Sciatic nerve (tissue), 2 donors: ENCODE measurements at regions of chr3 and their contacts with region 1.

Region 1: GRCh38 chr3:46733026-46733800 is 15.5 kb upstream of the PRSS50 start:
- DNase-seq: no peak
- ATAC-seq: no peak

Region 2: DNA sequence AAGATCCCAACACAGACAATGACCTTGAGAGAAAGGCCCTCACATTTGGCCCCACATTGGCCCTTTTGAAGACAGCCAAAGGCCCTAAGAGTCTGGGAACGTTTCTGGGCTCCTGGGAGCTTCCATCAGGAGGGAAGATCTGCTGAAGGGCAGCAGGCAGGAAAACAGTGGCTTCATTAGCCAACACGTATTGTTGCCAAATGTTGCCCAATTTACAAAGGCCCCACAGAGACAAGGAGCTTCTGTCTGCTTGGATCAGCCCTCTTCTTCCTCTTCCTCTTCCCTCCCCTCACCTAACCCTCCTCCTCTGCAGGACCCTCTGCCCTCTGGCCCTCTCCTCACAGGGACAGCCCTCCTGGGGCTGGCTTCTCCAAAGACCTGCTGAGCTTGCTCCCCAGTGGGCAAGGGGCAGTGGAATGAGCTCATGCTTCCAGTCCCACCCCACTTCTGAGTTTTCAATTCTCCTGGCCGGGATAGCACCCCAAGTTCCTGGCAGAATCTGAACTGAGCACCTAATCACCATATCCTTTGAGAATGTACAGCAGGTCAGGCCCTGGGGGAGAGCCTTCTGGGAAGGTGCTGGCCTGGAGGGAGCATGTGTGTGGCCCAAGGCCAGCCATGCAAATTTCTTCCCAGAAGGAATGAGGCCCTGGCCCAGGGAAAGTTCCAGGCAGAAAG is 263.4 kb before region 1 on chr3:
- intact Hi-C with region 1: no loop called
- DNase-seq: no peak
- ATAC-seq: peak; percentile 50

Region 3: GRCh38 chr3:46681856-46682540 is 51.2 kb before region 1 on chr3:
- intact Hi-C with region 1: loop called (anchors 2 kb)
- DNase-seq: no peak
- ATAC-seq: no peak